ENCODE measurements at regions of chr15 and their contacts with region 1.

Region 1: GRCh38 chr15:90512981-90513380 is 16.7 kb upstream of the CRTC3 start:
- DNase-seq: no peak
- ATAC-seq: no peak
- H3K4me3 ChIP-seq: no peak overlapping the region
- H3K4me3 Mint-ChIP-seq: no peak overlapping the region
- H3K27ac ChIP-seq: no peak overlapping the region
- H3K27ac Mint-ChIP-seq: no peak overlapping the region
- H3K4me1 ChIP-seq: peaks cover 0 to 6% of the 10 kb centered on the region in 2 experiments
- H3K4me1 Mint-ChIP-seq: peaks cover 12 to 17% (median 14%) of the 10 kb centered on the region in 3 donors
- H3K27me3 ChIP-seq: no peaks in the 10 kb centered on the region
- H3K27me3 Mint-ChIP-seq: no peaks in the 10 kb centered on the region

Region 2: GRCh38 chr15:90286678-90287077 is 226.3 kb before region 1 on chr15:
- CTCF ChIA-PET with region 1: no interaction called
- POLR2A ChIA-PET with region 1: interaction called in 1 of 2 experiments, 11 read pairs
- DNase-seq: peak in 31 of 35 experiments; percentile 19 to 75 (median 41)
- ATAC-seq: peak; percentile 61 to 91 (median 74)
- H3K4me3 ChIP-seq: no peak overlapping the region
- H3K4me3 Mint-ChIP-seq: no peak overlapping the region
- H3K27ac ChIP-seq: no peak overlapping the region
- H3K27ac Mint-ChIP-seq: no peak overlapping the region
- H3K4me1 ChIP-seq: no peaks in the 10 kb centered on the region
- H3K4me1 Mint-ChIP-seq: no peaks in the 10 kb centered on the region
- H3K27me3 ChIP-seq: peaks cover 0 to under 1% of the 10 kb centered on the region in 2 experiments
- H3K27me3 Mint-ChIP-seq: no peaks in the 10 kb centered on the region

Region 3: GRCh38 chr15:90362936-90363212 is 150.1 kb before region 1 on chr15:
- CTCF ChIA-PET with region 1: interaction called in 1 of 2 experiments, 10 read pairs
- POLR2A ChIA-PET with region 1: no interaction called
- DNase-seq: no peak
- ATAC-seq: no peak
- H3K4me3 ChIP-seq: no peak overlapping the region
- H3K4me3 Mint-ChIP-seq: no peak overlapping the region
- H3K27ac ChIP-seq: no peak overlapping the region
- H3K27ac Mint-ChIP-seq: peak overlapping the region in 1 of 2 donors; percentile 44
- H3K4me1 ChIP-seq: peaks cover 11 to 14% of the 10 kb centered on the region in 2 experiments
- H3K4me1 Mint-ChIP-seq: peaks cover 15 to 26% (median 20%) of the 10 kb centered on the region in 3 donors
- H3K27me3 ChIP-seq: no peaks in the 10 kb centered on the region
- H3K27me3 Mint-ChIP-seq: no peaks in the 10 kb centered on the region

Region 4: DNA sequence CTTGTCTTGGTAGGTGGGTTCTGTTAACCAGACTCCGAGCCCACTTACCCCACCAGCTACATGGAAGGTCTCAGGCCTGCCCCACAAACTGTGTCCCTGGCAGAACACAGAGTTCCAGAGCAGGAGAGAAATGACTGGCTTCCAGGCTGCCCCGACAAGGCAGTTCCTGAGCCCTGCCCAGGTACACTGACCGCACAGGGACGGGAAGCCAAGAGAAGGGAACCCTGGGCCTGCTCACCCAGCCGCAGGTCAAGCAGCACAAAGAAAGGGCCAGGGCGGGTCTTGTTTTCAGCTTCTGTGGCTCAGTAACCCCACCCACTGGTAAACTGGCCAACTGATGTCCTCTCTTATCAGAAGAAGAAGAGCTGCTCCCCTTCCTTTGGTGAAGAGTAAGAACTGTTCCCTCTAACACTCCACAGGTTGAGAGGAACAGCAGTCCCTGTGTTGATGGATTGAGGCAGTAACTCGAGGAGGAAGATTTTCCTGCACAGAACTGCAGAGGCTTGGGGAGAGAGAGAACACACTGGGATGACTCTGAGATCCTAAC is 85.1 kb after region 1 on chr15:
- CTCF ChIA-PET with region 1: no interaction called
- POLR2A ChIA-PET with region 1: interaction called in 1 of 2 experiments, 11 read pairs
- DNase-seq: peak in 2 of 35 experiments; percentile 14 to 22
- ATAC-seq: no peak
- H3K4me3 ChIP-seq: peak overlapping the region in 1 of 2 donors; percentile 3
- H3K4me3 Mint-ChIP-seq: peak overlapping the region; percentile 31 to 64 (median 41)
- H3K27ac ChIP-seq: peak overlapping the region; percentile 83
- H3K27ac Mint-ChIP-seq: peak overlapping the region; percentile 100
- H3K4me1 ChIP-seq: peaks cover 61 to 72% of the 10 kb centered on the region in 2 experiments
- H3K4me1 Mint-ChIP-seq: peaks cover 83 to 85% (median 85%) of the 10 kb centered on the region in 3 donors
- H3K27me3 ChIP-seq: no peaks in the 10 kb centered on the region
- H3K27me3 Mint-ChIP-seq: no peaks in the 10 kb centered on the region

Region 5: DNA sequence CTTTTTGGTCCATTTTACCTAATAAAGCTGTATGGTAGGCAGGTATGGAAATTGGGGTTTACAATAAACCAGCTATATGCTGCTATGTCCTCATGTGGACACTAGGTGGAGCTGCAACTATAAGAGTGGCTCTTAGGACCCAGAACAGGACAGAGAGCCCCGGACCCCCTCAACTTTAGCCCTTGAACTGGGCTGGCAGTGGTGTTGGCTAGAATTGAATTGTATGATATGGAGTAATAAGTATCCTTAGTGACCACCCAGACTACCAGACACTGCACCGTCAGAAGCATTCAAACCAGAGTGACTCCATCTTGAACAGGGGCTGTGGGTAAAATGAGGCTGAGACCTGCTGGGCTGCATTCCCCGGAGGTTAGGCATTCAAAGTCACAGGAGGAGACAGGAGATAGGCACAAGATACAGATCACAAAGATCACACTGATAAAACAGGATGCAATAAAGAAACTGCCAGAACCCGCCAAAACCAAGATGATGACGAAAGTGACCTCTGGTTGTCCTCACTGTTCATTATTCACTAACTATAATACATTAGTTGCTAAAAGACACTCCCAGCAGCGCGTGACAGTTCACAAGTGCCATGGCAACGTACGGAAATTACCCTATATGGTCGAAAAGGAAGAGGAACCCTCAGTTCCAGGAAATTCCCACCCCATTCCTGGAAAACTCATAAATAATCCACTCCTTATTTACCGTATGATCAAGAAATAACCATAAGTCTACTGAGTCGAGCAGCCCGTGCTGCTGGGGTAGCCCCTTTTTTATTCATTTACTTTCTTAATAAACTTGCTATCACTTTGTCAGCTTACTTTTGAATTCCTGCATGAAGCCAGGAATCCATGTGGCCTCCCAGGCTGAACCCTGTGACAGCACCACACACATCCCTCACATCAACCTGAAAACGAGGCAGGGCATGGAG is 135.4 kb after region 1 on chr15:
- CTCF ChIA-PET with region 1: interaction called in 1 of 2 experiments, 10 read pairs
- POLR2A ChIA-PET with region 1: no interaction called
- DNase-seq: peak in 30 of 35 experiments; percentile 10 to 82 (median 44)
- ATAC-seq: peak; percentile 66 to 77 (median 70)
- H3K4me3 ChIP-seq: no peak overlapping the region
- H3K4me3 Mint-ChIP-seq: peak overlapping the region in 2 of 3 donors; percentile 42 to 68
- H3K27ac ChIP-seq: no peak overlapping the region
- H3K27ac Mint-ChIP-seq: peak overlapping the region in 1 of 2 donors; percentile 45
- H3K4me1 ChIP-seq: peaks cover 6 to 19% of the 10 kb centered on the region in 2 experiments
- H3K4me1 Mint-ChIP-seq: peaks cover 23 to 40% (median 39%) of the 10 kb centered on the region in 3 donors
- H3K27me3 ChIP-seq: peaks cover 0 to 16% of the 10 kb centered on the region in 2 experiments
- H3K27me3 Mint-ChIP-seq: no peaks in the 10 kb centered on the region

Region 6: GRCh38 chr15:91737151-91737818 is 1224.3 kb after region 1 on chr15:
- CTCF ChIA-PET with region 1: no interaction called
- POLR2A ChIA-PET with region 1: no interaction called
- DNase-seq: no peak
- ATAC-seq: no peak
- H3K4me3 ChIP-seq: no peak overlapping the region
- H3K4me3 Mint-ChIP-seq: no peak overlapping the region
- H3K27ac ChIP-seq: no peak overlapping the region
- H3K27ac Mint-ChIP-seq: no peak overlapping the region
- H3K4me1 ChIP-seq: no peaks in the 10 kb centered on the region
- H3K4me1 Mint-ChIP-seq: no peaks in the 10 kb centered on the region
- H3K27me3 ChIP-seq: peaks cover 0 to 15% of the 10 kb centered on the region in 2 experiments
- H3K27me3 Mint-ChIP-seq: peaks cover 37 to 45% of the 10 kb centered on the region in 2 donors

Region 7: DNA sequence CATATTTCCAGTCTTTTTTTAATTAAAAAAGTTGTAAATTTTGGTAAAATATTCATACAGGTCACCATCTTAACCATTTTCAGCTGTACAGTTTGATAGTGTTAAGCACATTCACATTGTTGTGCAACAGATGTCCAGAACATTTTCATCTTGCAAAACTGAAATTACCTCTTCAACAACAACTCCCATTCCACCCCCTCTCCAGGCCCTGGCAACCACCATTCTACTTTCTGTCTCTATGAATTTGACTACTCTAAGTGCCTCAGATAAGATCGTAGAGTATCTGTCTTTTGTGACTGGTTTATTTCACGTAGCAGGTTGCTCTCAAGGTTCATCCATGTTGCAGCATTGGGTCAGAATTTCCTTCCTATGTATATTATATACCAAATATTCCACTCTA is 1416.5 kb after region 1 on chr15:
- CTCF ChIA-PET with region 1: no interaction called
- POLR2A ChIA-PET with region 1: interaction called in 1 of 2 experiments, 16 read pairs
- DNase-seq: no peak
- ATAC-seq: no peak
- H3K4me3 ChIP-seq: no peak overlapping the region
- H3K4me3 Mint-ChIP-seq: no peak overlapping the region
- H3K27ac ChIP-seq: no peak overlapping the region
- H3K27ac Mint-ChIP-seq: no peak overlapping the region
- H3K4me1 ChIP-seq: no peaks in the 10 kb centered on the region
- H3K4me1 Mint-ChIP-seq: peaks cover 34 to 65% (median 36%) of the 10 kb centered on the region in 3 donors
- H3K27me3 ChIP-seq: no peaks in the 10 kb centered on the region
- H3K27me3 Mint-ChIP-seq: no peaks in the 10 kb centered on the region

Measured in T-cell (primary cell).